ENCODE measurements at regions of chr10 and their contacts with region 1.

Region 1: GRCh38 chr10:90862908-90863514 is 5.2 kb upstream of the HTR7 start:
- DNase-seq: no peak
- ATAC-seq: no peak
- H3K4me3 ChIP-seq: no peak overlapping the region
- H3K27ac ChIP-seq: no peak overlapping the region
- H3K4me1 ChIP-seq: peaks cover 18 to 31% of the 10 kb centered on the region in 2 experiments
- H3K27me3 ChIP-seq: no peaks in the 10 kb centered on the region
- CTCF ChIP-seq: peak; percentile 76 to 90 (median 90)
- POLR2A ChIP-seq: no peak
- RAD21 ChIP-seq: peak; percentile 91

Region 2: GRCh38 chr10:89563861-89564478 is 1299.0 kb before region 1 on chr10:
- CTCF ChIA-PET with region 1: no interaction called
- POLR2A ChIA-PET with region 1: no interaction called
- RAD21 ChIA-PET with region 1: no interaction called
- intact Hi-C with region 1: loop called (anchors 10 kb)
- DNase-seq: peak; percentile 47
- ATAC-seq: peak; percentile 80
- H3K4me3 ChIP-seq: no peak overlapping the region
- H3K27ac ChIP-seq: no peak overlapping the region
- H3K4me1 ChIP-seq: no peaks in the 10 kb centered on the region
- H3K27me3 ChIP-seq: no peaks in the 10 kb centered on the region
- CTCF ChIP-seq: peak; percentile 68 to 92 (median 70)
- POLR2A ChIP-seq: no peak
- RAD21 ChIP-seq: peak; percentile 91

Region 3: DNA sequence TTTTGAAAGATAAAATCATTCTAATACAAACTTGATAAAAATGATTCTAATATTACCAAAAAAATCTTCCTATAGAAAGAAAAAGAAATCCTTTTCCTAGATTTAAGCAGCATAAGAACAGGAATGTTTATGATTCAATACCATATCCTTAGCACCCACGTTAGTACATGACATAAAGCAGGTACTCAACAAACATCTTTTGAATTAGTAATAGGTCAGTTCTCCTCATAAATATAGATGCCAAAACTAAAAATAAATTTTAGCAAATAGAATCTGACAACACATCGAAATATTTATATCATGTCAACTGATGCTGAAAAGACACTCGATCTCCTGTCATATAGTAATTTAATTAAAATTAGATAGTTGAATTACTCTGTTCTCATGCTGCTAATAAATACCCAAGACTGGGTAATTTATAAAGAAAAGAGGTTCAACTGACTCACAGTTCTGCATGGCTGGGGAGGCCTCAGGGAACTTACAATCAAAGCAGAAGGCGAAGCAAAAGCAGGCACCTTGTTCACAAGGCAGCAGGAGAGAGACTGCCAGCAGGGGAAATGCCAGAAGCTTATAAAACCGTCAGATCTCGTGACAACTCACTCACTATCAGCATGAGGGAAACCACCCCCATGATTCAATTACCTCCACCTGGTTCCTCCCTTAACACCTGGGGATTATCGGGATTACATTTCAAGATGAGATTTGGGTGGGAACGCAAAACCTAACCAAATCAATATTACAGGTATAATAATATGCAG is 196.9 kb before region 1 on chr10:
- CTCF ChIA-PET with region 1: interaction called, 3 read pairs
- POLR2A ChIA-PET with region 1: no interaction called
- RAD21 ChIA-PET with region 1: no interaction called
- intact Hi-C with region 1: loop called (anchors 10 kb)
- DNase-seq: no peak
- ATAC-seq: no peak
- H3K4me3 ChIP-seq: no peak overlapping the region
- H3K27ac ChIP-seq: no peak overlapping the region
- H3K4me1 ChIP-seq: no peaks in the 10 kb centered on the region
- H3K27me3 ChIP-seq: no peaks in the 10 kb centered on the region
- CTCF ChIP-seq: no peak
- POLR2A ChIP-seq: no peak
- RAD21 ChIP-seq: no peak

Region 4: DNA sequence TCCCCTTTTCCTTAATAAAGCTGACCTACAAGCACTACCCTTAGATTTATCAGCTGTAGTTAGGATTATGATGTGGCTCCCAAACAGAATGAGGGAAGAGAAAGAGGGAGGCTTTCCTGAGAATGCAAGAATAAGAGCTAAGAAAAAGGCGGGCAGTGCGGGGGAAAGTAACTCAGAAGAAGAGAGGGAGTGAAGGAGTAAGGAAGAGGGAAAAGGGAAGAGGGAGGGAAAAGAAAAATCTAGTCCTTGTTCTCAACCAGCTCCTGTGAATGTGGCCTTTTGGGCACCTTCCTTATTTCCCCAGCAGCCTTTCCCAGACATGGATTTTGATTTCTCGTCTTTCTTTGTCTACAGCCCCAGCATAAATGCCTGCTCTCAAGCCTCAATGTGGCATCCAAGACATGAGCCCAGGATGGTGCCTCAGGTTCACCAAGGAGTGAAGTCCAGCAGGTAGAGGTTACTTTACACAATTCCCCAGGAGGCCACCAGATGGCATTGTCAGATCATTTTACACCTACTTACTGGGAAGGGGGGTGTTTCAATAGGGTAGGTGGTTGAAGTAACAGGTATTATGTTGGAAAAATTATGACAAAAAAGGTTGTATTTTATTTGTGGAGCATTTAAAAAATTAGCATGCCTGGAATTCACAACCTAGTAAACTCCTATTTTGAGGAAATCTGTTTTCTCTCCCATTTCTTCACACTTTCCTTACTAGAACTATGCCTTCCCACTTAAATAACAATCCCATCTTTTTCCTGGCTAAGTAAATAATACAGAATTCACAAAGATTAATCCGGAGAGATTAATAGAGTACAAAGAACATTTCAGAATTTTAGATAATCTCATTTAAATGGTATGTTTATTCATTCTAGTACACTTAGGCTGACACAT is 111.7 kb before region 1 on chr10:
- CTCF ChIA-PET with region 1: interaction called, 39 read pairs
- POLR2A ChIA-PET with region 1: no interaction called
- RAD21 ChIA-PET with region 1: interaction called, 4 to 5 read pairs
- intact Hi-C with region 1: loop called (anchors 1 kb)
- DNase-seq: peak; percentile 45
- ATAC-seq: peak; percentile 99
- H3K4me3 ChIP-seq: no peak overlapping the region
- H3K27ac ChIP-seq: no peak overlapping the region
- H3K4me1 ChIP-seq: 0 out of 4 replicates have a peak, but pooled peaks cover 0 to 6% of the 10 kb centered on the region in 2 experiments
- H3K27me3 ChIP-seq: no peaks in the 10 kb centered on the region
- CTCF ChIP-seq: peak; percentile 73 to 91 (median 80)
- POLR2A ChIP-seq: no peak
- RAD21 ChIP-seq: peak; percentile 90